Endothelial cell of umbilical vein (primary cell): ENCODE measurements at regions of chr2 and their contacts with region 1.

Region 1: DNA sequence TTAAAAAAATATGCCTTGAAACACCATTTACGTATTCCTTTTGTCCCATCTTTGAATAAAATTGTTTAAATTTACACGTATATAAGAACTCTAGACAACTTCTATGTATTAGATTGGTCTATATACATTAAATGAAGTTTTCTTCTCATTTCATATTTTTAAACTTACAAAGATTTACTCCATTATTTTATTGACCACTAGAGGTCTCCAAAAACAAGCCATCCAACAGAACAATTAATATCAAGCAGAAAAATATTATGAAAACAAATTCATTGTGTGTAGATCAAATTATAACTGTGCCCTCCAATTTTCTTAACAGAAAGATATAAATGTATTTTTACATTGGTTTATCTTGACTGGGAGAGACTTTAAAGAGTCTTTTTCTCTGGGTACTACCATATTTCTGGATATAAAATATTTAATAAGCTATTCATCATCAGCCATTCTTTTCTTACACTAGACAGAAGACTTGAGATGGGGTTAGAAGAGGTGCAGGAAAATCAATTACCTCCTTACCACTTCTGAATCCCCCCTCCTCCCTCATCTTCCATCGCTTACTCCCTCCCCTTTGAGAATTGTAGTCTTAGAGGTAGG is 66.5 kb downstream of the DPP4 start:
- DNase-seq: peak; percentile 38
- H3K4me3 ChIP-seq: no peak overlapping the region
- H3K27ac ChIP-seq: no peak overlapping the region
- H3K4me1 ChIP-seq: no peaks in the 10 kb centered on the region
- H3K27me3 ChIP-seq: no peaks in the 10 kb centered on the region
- CTCF ChIP-seq: peak; percentile 21 to 29
- POLR2A ChIP-seq: no peak

Region 2: GRCh38 chr2:161586517-161587167 is 420.9 kb before region 1 on chr2:
- CTCF ChIA-PET with region 1: interaction called, 4 read pairs
- POLR2A ChIA-PET with region 1: no interaction called
- dilution Hi-C with region 1: no loop called
- intact Hi-C with region 1: loop called (anchors 5 kb)
- DNase-seq: peak; percentile 42
- H3K4me3 ChIP-seq: no peak overlapping the region
- H3K27ac ChIP-seq: no peak overlapping the region
- H3K4me1 ChIP-seq: no peaks in the 10 kb centered on the region
- H3K27me3 ChIP-seq: no peaks in the 10 kb centered on the region
- CTCF ChIP-seq: peak; percentile 47
- POLR2A ChIP-seq: no peak

Region 3: DNA sequence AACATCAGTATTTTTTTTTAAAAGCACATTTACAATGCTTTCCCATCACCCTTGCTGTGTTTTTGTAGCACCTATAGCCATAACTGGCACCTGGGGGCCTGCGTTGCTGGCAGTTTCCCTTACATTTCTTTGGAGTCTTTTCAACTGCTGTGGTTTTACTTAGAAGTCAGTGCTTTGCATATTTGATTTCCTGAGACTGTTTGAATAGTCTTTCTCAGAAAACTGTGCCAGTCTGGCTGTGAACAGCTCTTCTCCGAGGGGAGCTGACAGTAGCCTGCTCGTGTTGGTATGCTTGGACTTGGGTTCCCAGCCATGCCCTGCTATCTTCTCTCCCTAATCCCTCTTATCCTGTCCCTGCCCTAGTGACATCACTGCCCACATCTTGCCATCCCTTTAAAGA is 15.0 kb before region 1 on chr2:
- CTCF ChIA-PET with region 1: interaction called, 26 read pairs
- POLR2A ChIA-PET with region 1: no interaction called
- dilution Hi-C with region 1: no loop called
- intact Hi-C with region 1: no loop called
- DNase-seq: no peak
- H3K4me3 ChIP-seq: no peak overlapping the region
- H3K27ac ChIP-seq: no peak overlapping the region
- H3K4me1 ChIP-seq: no peaks in the 10 kb centered on the region
- H3K27me3 ChIP-seq: no peaks in the 10 kb centered on the region
- CTCF ChIP-seq: no peak
- POLR2A ChIP-seq: no peak

Region 4: DNA sequence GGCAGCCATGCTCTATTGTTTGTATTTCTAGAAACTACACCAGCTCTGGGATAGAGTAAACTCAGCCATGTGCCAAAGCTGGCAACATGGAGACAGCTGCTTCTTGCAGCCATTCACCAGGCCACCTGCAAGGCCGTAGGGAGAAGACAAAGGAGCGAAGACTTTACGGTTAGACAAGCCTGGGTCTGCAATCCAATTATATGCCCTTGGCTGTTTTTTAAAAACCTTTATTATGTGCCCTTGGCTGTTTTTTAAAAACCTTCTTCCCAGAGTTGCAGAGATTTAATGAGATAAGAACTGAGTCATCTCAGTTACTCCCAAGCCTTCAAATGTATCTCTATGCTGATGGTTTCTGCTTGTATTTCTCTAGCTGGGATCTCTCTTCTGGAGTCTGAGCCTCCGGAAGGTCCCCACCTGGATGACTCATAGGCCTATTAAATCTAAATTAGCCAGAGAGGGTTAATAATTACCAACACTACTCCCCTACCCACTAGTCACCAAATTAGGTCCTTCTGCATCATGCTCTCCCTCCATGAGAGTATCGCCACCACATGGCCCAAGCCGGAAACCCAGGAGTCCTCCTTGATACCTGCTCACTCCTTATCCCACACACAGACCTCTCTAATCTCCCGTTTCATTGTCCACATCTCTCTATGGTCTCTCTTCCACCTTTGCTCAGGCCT is 83.9 kb after region 1 on chr2:
- CTCF ChIA-PET with region 1: interaction called, 14 read pairs
- POLR2A ChIA-PET with region 1: no interaction called
- dilution Hi-C with region 1: no loop called
- intact Hi-C with region 1: no loop called
- DNase-seq: peak; percentile 41
- H3K4me3 ChIP-seq: no peak overlapping the region
- H3K27ac ChIP-seq: peak overlapping the region; percentile 89
- H3K4me1 ChIP-seq: peaks cover 40% of the 10 kb centered on the region
- H3K27me3 ChIP-seq: no peaks in the 10 kb centered on the region
- CTCF ChIP-seq: no peak
- POLR2A ChIP-seq: no peak

Region 5: GRCh38 chr2:162153608-162154224 is 146.2 kb after region 1 on chr2:
- CTCF ChIA-PET with region 1: interaction called, 10 read pairs
- POLR2A ChIA-PET with region 1: no interaction called
- dilution Hi-C with region 1: no loop called
- intact Hi-C with region 1: no loop called
- DNase-seq: peak; percentile 66
- H3K4me3 ChIP-seq: no peak overlapping the region
- H3K27ac ChIP-seq: no peak overlapping the region
- H3K4me1 ChIP-seq: peaks cover 3% of the 10 kb centered on the region
- H3K27me3 ChIP-seq: peaks cover 1 to 20% of the 10 kb centered on the region in 2 experiments
- CTCF ChIP-seq: peak; percentile 59 to 69
- POLR2A ChIP-seq: no peak